Activated T-helper 2 cell treated with anti-CD3 and anti-CD28 coated beads, Interferon-gamma antibody, Interleukin-2, Interleukin-4, amounts not matched to agents 10 μg/mL and 5 μg/mL and 100 μg/mL, durations not matched to agents 14 hours and 24 hours and 36 hours (primary cell): ENCODE measurements at regions of chr10 and their contacts with region 1.

Region 1: DNA sequence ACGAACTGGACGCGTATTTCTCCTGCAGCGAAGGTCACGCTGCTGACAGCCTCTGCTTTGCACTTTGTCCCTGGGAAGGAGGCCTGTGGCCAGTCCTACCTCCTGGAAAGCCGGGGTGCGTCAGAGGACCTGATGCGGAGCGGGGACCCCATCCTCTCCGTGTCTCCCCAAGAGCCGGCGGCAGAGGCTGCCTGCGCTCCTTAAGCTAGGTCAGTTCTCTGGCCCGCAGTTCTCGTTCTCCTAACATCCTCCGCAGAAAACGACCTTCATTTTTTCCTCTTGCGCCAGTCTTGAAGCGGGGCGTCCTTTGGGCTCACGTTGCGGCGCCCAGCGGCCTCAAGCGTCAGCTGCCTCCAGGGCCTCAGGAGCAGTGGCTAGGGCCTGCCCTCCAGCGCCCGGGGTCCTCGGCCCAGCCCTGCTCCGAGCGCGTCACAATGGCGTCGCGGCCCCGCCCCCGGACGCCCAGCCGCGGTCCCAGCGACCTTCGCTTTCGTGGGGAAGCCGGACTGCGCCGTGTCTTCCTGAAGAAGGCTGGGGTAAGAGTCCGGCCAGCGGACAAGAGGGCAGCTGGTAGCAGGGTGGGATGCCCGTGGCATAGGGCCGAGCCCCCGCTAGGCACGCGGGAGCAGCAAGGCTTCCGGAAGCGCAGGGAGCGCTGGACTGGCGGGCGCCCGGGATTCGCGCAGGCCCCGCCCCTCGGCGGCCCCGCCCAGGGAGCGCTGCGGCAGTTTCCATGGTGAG is at the start of gene ZNF487:
- DNase-seq: peak; percentile 88
- H3K4me3 Mint-ChIP-seq: peak within 1 kb of the TSS; percentile 87
- H3K27ac Mint-ChIP-seq: peak within 1 kb of the TSS; percentile 94
- H3K4me1 Mint-ChIP-seq: peaks cover 5% of the 10 kb centered on the region
- H3K27me3 Mint-ChIP-seq: no peaks in the 10 kb centered on the region
- total RNA-seq, gene ZNF487: 2.0 and 2.2 TPM in 2 replicates

Region 2: DNA sequence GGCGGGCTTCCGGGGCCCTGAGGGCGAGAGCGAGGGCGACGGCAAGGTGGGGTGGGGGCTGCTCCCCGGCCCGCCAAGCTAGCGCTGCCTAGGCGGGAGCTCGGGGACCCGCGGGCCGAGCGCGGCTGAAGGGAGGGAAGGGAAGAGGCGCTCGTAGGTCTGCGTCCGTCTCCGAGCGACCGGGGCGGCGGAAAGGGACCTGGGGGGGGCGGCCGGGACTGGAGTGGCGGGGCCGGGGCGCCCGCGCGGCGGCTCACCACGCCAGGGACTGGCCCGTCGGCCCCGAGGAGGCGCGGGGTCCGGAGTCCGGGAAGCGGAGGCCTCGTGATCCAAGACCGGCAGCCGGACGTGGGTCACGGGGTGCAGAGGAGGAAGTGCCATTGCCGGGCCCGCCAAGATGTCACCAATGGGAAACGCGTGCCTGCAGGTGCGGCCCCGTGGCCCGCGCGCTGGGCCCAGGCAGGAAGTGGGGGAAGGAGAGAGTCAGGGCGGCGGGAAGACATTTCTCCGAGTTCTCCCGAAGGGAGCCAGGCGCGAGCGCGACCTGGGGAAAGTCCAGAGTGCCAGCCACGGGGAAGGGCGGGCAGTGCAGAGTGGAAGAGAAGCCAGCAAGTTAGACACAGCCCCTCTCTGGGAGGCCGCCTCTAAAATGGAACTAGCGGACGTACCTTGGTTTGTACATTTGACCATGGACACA is 39.5 kb before region 1 on chr10:
- intact Hi-C with region 1: loop called (anchors 2 kb)
- DNase-seq: peak; percentile 84
- H3K4me3 Mint-ChIP-seq: peak overlapping the region; percentile 86
- H3K27ac Mint-ChIP-seq: peak overlapping the region; percentile 93
- H3K4me1 Mint-ChIP-seq: peaks cover 62% of the 10 kb centered on the region
- H3K27me3 Mint-ChIP-seq: no peaks in the 10 kb centered on the region

Region 3: DNA sequence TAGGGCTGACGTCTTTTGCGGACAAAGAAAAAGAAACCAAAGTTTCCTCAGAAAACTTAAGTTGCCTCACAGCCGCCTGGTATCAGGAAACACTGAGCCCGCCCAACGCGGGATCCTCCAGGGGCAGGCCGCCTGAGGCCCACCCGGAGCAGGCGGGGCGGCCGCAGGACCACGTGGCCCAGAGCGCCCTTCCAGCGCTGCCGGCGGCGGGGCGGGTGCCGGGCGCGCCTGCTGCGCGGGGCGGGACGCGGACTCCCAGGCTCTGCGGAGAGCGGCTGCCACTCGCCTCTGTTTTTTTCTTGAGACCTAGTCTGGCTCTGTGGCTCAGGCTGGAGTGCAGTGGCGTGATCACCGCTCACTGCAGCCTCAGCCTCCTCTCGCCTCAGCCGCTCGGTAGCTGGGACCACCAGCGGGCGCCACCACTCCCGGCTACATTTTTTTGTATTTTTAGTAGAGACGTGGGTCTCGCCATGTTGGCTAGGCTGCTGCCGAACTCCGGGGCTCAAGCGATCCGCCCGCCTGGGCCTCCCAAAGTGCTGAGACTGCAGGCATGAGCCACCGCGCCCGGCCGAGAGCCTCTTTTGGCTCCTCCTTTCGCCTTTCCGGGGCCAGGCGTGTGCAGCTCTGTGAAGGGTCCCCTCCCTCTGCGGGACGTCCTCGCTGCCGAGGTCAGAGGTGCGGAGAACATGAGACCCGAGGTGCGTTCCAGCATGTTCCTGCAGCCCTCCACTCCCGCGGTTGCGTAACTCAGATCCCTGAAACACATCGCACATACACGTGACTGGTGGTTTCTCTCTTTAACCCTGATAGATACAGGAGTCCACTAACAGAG is 16.0 kb before region 1 on chr10:
- intact Hi-C with region 1: loop called (anchors 1 kb)
- DNase-seq: peak; percentile 80
- H3K4me3 Mint-ChIP-seq: peak overlapping the region; percentile 82
- H3K27ac Mint-ChIP-seq: peak overlapping the region; percentile 98
- H3K4me1 Mint-ChIP-seq: peaks cover 30% of the 10 kb centered on the region
- H3K27me3 Mint-ChIP-seq: no peaks in the 10 kb centered on the region